ENCODE measurements at regions of chr9 and their contacts with region 1.

Region 1: GRCh38 chr9:6412487-6413364 is at the start of gene UHRF2:
- DNase-seq: peak; percentile 98 to 100 (median 99)
- ATAC-seq: peak; percentile 90
- H3K4me3 ChIP-seq: peak within 1 kb of the TSS; percentile 70
- H3K4me3 Mint-ChIP-seq: peak within 1 kb of the TSS; percentile 93
- H3K27ac ChIP-seq: peak within 1 kb of the TSS; percentile 81 to 91
- H3K27ac Mint-ChIP-seq: peak within 1 kb of the TSS; percentile 88
- H3K4me1 ChIP-seq: peaks cover 32% of the 10 kb centered on the region
- H3K4me1 Mint-ChIP-seq: peaks cover 42% of the 10 kb centered on the region
- H3K27me3 ChIP-seq: no peaks in the 10 kb centered on the region
- H3K27me3 Mint-ChIP-seq: no peaks in the 10 kb centered on the region
- CTCF ChIP-seq: no peak
- total RNA-seq, gene UHRF2: 141 to 149 TPM

Region 2: GRCh38 chr9:4792572-4793458 is 1619.9 kb before region 1 on chr9 and contains the start of gene RCL1:
- CTCF ChIA-PET with region 1: no interaction called
- POLR2A ChIA-PET with region 1: interaction called, 5 read pairs
- intact Hi-C with region 1: loop called in 1 of 2 experiments (anchors 5 kb)
- DNase-seq: peak; percentile 89 to 98 (median 94)
- ATAC-seq: peak; percentile 89
- H3K4me3 ChIP-seq: peak within 1 kb of the TSS; percentile 87
- H3K4me3 Mint-ChIP-seq: peak within 1 kb of the TSS; percentile 97
- H3K27ac ChIP-seq: peak within 1 kb of the TSS; percentile 83 to 87
- H3K27ac Mint-ChIP-seq: peak within 1 kb of the TSS; percentile 92
- H3K4me1 ChIP-seq: peaks cover 25% of the 10 kb centered on the region
- H3K4me1 Mint-ChIP-seq: peaks cover 45% of the 10 kb centered on the region
- H3K27me3 ChIP-seq: no peaks in the 10 kb centered on the region
- H3K27me3 Mint-ChIP-seq: no peaks in the 10 kb centered on the region
- CTCF ChIP-seq: no peak
- total RNA-seq, gene RCL1: 33.8 to 35.5 TPM

Region 3: GRCh38 chr9:6015278-6016157 is 397.2 kb before region 1 on chr9 and contains the start of gene RANBP6:
- CTCF ChIA-PET with region 1: no interaction called
- POLR2A ChIA-PET with region 1: interaction called, 13 read pairs
- intact Hi-C with region 1: loop called in 1 of 2 experiments (anchors 5 kb)
- DNase-seq: peak; percentile 82 to 95 (median 89)
- ATAC-seq: peak; percentile 98
- H3K4me3 ChIP-seq: peak within 1 kb of the TSS; percentile 86
- H3K4me3 Mint-ChIP-seq: peak within 1 kb of the TSS; percentile 94
- H3K27ac ChIP-seq: peak within 1 kb of the TSS; percentile 72 to 83
- H3K27ac Mint-ChIP-seq: peak within 1 kb of the TSS; percentile 97
- H3K4me1 ChIP-seq: peaks cover 18% of the 10 kb centered on the region
- H3K4me1 Mint-ChIP-seq: peaks cover 41% of the 10 kb centered on the region
- H3K27me3 ChIP-seq: no peaks in the 10 kb centered on the region
- H3K27me3 Mint-ChIP-seq: no peaks in the 10 kb centered on the region
- CTCF ChIP-seq: no peak
- total RNA-seq, gene RANBP6: 36.7 to 40.6 TPM

Region 4: DNA sequence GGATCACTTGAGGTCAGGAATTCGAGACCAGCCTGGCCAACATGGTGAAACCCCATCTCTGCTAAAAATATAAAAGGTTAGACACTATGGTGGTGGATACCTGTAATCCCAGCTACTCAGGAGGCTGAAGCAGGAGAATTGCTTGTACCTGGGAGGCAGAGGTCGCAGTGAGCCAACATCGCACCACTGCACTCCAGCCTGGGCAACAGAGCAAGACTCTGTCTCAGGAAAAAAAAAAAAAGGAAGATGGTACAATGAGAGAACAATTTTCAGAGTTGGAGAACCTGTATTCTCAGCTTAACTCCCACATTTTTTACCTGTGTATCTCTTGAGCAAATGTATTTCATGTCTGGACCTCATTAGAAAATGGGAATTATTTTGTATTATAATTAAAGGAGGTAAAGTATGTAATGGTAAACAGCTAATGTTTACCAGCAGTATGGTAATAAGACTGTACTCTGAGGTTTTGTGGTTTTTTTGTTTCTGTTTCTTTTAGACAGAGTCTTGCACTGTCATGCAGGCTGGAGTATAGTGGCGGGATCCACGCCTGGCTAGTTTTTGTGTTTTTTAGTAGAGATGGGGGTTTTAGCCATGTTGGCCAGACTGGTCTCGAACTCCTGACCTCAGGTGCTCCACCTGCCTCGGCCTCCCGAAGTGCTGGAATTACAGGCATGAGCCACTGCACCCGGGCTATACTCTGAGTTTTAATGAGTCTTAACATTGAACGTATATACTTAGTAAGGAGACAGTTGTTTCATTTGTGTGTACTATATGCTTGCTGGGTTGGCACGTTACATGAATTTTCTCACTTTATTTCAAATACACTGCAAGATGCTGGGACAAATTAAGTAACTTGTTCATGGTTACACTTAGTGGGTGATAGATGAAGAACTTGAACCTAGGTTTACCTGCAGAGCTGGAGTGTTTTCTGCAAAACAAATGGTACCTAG is 16.5 kb after region 1 on chr9:
- CTCF ChIA-PET with region 1: interaction called, 7 read pairs
- POLR2A ChIA-PET with region 1: interaction called, 95 read pairs
- intact Hi-C with region 1: no loop called
- DNase-seq: peak in 4 of 14 experiments; percentile 13 to 70 (median 35)
- ATAC-seq: peak; percentile 78
- H3K4me3 ChIP-seq: no peak overlapping the region
- H3K4me3 Mint-ChIP-seq: peak overlapping the region; percentile 87
- H3K27ac ChIP-seq: peak overlapping the region in 1 of 2 donors; percentile 3
- H3K27ac Mint-ChIP-seq: peak overlapping the region; percentile 86
- H3K4me1 ChIP-seq: peaks cover 35% of the 10 kb centered on the region
- H3K4me1 Mint-ChIP-seq: peaks cover 79% of the 10 kb centered on the region
- H3K27me3 ChIP-seq: no peaks in the 10 kb centered on the region
- H3K27me3 Mint-ChIP-seq: no peaks in the 10 kb centered on the region
- CTCF ChIP-seq: no peak

Region 5: DNA sequence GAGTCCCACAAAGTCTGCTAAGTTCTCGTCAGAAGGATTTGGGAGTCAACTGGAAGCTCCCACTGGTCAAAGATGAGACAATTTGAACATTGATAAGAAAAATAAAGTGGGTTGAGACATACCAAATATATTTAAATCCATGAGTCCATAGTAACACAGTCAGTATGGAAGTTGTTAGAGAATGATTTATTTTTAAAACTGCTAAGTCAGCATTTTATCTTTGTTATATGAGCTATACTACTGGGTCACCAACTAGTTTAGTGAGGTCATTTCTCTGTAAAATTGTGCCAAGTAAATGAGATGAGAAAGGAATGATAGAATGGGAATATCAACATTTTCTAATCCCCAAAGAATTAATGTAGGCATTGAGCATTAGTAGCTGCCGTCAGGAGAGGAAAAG is 60.4 kb after region 1 on chr9:
- CTCF ChIA-PET with region 1: no interaction called
- POLR2A ChIA-PET with region 1: interaction called, 10 read pairs
- intact Hi-C with region 1: loop called in 1 of 2 experiments (anchors 5 kb)
- DNase-seq: no peak
- ATAC-seq: no peak
- H3K4me3 ChIP-seq: no peak overlapping the region
- H3K4me3 Mint-ChIP-seq: no peak overlapping the region
- H3K27ac ChIP-seq: no peak overlapping the region
- H3K27ac Mint-ChIP-seq: peak overlapping the region; percentile 11
- H3K4me1 ChIP-seq: no peaks in the 10 kb centered on the region
- H3K4me1 Mint-ChIP-seq: peaks cover 23% of the 10 kb centered on the region
- H3K27me3 ChIP-seq: no peaks in the 10 kb centered on the region
- H3K27me3 Mint-ChIP-seq: no peaks in the 10 kb centered on the region
- CTCF ChIP-seq: no peak

Region 6: DNA sequence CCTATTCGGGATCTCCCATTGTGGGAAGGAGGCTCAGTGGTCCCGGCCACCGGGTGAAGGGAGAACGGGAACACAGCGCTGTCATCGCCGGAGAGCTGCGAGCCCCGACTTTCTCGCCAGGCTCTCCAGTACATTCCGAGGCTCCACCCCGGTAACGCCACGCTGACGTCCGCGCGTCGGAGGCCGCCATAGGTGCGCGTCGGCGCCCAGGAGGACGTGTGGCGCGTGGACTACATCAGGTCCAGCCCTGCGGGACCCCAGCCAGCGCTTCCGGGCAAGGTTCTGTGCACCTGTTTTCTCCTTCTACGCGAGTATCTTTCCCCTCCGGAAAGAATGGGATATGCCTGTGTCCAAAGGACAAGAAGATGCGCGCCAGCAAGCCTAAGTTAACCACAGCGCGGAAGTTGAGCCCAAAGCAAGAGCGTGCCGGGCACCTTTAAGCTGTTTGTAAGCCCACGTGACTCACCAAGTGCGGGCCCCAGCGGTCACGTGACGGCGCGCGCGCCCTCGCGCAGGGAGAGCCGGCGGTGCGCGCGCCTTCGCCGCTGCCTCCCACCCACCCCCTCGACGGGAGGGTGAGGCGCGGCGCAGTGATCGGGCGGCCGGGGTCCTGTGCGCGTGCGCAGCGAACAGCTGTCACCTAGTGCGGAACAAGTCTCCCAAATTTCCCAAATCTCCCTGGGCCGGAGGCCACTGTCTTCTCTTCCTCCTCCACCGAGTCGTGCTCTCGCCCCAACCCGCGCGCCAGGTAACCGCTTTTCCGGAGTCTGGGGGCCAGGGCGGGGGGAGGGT is 344.9 kb after region 1 on chr9 and contains the start of gene KDM4C:
- CTCF ChIA-PET with region 1: no interaction called
- POLR2A ChIA-PET with region 1: interaction called, 110 read pairs
- intact Hi-C with region 1: loop called (anchors 1 to 5 kb)
- DNase-seq: peak; percentile 87 to 98 (median 94)
- ATAC-seq: peak; percentile 70
- H3K4me3 ChIP-seq: peak within 1 kb of the TSS; percentile 90
- H3K4me3 Mint-ChIP-seq: peak within 1 kb of the TSS; percentile 96
- H3K27ac ChIP-seq: peak within 1 kb of the TSS; percentile 96 to 99
- H3K27ac Mint-ChIP-seq: peak within 1 kb of the TSS; percentile 96
- H3K4me1 ChIP-seq: peaks cover 26% of the 10 kb centered on the region
- H3K4me1 Mint-ChIP-seq: peaks cover 25% of the 10 kb centered on the region
- H3K27me3 ChIP-seq: no peaks in the 10 kb centered on the region
- H3K27me3 Mint-ChIP-seq: no peaks in the 10 kb centered on the region
- CTCF ChIP-seq: no peak
- total RNA-seq, gene KDM4C: 60.1 to 61.3 TPM

Region 7: DNA sequence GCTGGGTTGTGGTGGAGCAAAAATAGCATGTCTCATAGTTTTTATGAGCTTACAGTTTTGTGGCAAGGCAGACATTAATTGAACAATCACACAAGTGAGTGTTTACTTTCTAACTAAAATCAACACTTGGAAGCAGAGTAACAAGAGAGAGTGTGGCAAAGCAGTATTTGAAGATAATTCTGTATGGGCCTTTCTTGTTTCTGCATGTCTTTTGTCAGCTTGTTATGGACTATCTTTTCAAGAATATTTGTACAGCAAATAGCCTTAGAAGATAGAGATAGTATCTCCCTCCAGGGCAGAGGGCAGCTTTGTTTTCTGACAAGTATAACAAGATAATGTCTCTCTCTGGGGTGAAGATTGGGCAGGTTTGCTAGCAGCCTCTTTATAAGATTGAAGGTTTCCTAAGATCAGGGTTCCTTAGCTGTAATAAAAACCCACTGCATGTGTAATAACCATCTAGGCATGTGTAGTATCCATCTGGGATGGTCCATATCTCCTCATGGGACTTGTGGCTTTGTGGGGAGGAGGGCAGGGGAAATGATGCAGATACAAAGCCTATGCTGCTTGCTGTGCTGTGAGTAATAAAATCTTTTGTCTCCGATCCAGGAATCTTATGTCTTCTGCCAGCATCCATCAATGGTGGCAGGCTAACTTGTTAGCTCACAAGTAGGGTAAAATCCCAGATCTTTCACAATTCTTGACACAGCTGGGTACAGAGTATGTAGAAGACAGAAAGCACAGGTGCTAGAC is 824.9 kb after region 1 on chr9:
- CTCF ChIA-PET with region 1: no interaction called
- POLR2A ChIA-PET with region 1: no interaction called
- intact Hi-C with region 1: no loop called
- DNase-seq: no peak
- ATAC-seq: no peak
- H3K4me3 ChIP-seq: no peak overlapping the region
- H3K4me3 Mint-ChIP-seq: no peak overlapping the region
- H3K27ac ChIP-seq: no peak overlapping the region
- H3K27ac Mint-ChIP-seq: no peak overlapping the region
- H3K4me1 ChIP-seq: no peaks in the 10 kb centered on the region
- H3K4me1 Mint-ChIP-seq: no peaks in the 10 kb centered on the region
- H3K27me3 ChIP-seq: no peaks in the 10 kb centered on the region
- H3K27me3 Mint-ChIP-seq: no peaks in the 10 kb centered on the region
- CTCF ChIP-seq: no peak